Posterior vena cava (tissue), 2 donors: ENCODE measurements at regions of chr13 and their contacts with region 1.

Region 1: GRCh38 chr13:82636124-82636523 is 1246.2 kb downstream of the SLITRK1 start:
- DNase-seq: no peak

Region 2: DNA sequence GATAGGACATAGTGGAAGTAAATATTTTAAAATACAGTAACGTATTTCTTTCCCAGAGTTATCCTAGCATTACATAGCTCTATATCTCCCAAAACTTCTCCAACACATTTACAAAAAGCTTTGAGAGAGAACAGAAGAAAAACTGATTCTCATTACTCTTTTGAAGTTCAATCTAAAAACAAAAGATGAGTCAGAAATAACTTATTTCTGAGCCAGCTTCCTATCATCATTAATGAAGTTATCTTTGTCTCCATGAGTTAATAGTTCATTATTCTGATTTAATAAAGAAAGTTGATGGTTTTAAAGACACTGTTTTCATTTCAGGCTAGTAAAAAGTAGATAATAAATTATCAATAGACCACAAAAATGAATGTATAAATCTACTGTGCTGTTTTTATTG is 1848.5 kb before region 1 on chr13:
- intact Hi-C with region 1: no loop called
- DNase-seq: no peak

Region 3: DNA sequence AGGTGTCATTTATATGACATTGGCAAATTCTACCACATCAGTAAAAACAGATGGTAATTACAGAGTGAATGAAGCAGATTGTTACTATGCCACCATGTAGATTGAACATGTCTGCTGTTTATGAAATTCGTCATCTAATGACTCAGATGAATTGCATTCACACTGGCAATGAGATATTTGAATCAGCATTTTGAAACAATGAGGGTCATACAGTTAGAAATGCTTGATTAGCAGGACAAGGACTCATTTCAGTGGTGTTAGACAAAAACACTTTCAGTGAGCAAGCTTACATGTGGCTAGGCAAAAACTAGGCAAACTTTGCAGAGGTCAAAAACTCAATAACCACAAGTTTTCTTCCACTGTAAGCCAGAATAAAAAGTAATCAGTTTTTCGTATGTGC is 81.1 kb after region 1 on chr13:
- intact Hi-C with region 1: no loop called
- DNase-seq: no peak

Region 4: DNA sequence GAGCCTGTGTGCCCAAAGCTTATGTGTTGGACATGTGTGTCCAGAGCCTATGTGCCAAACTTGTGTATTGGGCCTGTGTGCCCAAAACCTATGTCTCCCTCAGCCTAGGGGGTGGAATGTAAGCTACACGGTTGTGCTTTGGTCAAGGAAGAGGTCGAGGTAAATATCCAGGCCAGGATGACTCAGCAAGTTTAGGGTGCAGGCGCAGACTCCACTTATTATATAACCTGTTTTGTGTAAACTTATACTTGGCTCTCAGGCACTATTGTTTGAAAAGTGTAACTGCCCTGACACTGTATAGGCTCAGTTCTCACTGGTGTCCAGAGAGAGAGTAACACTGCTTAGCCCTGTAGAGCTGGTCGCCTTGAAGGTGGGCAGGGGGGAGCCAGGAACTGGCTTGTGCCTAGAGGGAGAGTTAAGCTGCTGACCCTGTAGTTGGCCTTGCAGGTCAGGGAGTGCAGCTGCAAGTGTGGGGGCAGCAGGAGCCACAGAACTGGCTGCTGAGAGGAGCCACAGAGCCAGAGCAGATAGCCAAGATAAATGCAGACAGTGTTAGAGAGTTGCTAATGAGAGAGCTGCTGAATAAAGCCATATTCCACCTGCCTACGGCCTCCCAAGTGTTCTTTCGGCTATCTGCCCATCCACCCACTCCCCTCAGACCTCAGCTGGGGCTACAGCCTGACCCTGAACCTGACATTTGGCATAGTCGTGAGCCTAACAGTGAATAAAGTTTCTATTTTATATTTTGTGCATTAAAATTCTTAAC is 1763.4 kb after region 1 on chr13:
- intact Hi-C with region 1: loop called in 1 of 2 experiments (anchors 10 kb)
- DNase-seq: no peak